ENCODE measurements at regions of chr4 and their contacts with region 1.

Region 1: DNA sequence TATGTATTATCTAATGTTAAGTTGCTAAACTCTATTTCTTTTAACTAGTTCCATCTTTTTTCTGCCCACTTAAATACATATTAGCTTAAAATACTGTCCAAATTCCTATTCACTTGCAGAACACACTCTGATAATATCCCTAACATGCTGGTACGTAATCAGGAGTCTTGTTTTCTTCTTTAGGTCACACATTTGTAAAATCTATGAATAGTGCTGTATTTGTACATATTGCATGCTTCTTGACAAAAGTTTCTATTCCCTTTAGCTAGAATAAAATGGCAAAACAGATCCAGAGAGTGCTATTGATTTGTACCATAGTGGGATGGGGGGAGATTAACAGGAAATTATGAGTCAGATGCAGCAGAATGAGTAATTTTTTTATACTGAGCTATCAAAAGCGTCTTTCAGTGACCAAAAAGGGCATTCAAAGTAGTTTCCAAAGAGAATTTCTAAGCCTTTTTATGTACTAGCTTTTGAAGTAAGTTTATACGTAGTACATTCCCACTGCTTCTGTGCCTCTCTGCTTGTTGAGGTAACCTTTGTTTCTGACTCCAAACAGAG is 126.5 kb downstream of the PTPN13 start:
- DNase-seq: no peak
- ATAC-seq: no peak
- H3K4me3 ChIP-seq: no peak overlapping the region
- H3K4me3 Mint-ChIP-seq: no peak overlapping the region
- H3K27ac ChIP-seq: no peak overlapping the region
- H3K27ac Mint-ChIP-seq: no peak overlapping the region
- H3K4me1 ChIP-seq: no peaks in the 10 kb centered on the region
- H3K4me1 Mint-ChIP-seq: no peaks in the 10 kb centered on the region
- H3K27me3 ChIP-seq: no peaks in the 10 kb centered on the region
- H3K27me3 Mint-ChIP-seq: no peaks in the 10 kb centered on the region
- CTCF ChIP-seq: no peak

Region 2: GRCh38 chr4:86653237-86653865 is 67.2 kb before region 1 on chr4:
- CTCF ChIA-PET with region 1: no interaction called
- POLR2A ChIA-PET with region 1: no interaction called
- intact Hi-C with region 1: loop called in 1 of 2 experiments (anchors 2 kb)
- DNase-seq: no peak
- ATAC-seq: no peak
- H3K4me3 ChIP-seq: no peak overlapping the region
- H3K4me3 Mint-ChIP-seq: no peak overlapping the region
- H3K27ac ChIP-seq: no peak overlapping the region
- H3K27ac Mint-ChIP-seq: no peak overlapping the region
- H3K4me1 ChIP-seq: no peaks in the 10 kb centered on the region
- H3K4me1 Mint-ChIP-seq: no peaks in the 10 kb centered on the region
- H3K27me3 ChIP-seq: no peaks in the 10 kb centered on the region
- H3K27me3 Mint-ChIP-seq: peaks cover 4% of the 10 kb centered on the region
- CTCF ChIP-seq: no peak